Naive thymus-derived CD4-positive, alpha-beta T cell (primary cell): ENCODE measurements at regions of chr2 and their contacts with region 1.

Region 1: GRCh38 chr2:177263451-177264208 is 897 bp downstream of the NFE2L2 start:
- DNase-seq: peak; percentile 91 to 98 (median 95)
- ATAC-seq: peak; percentile 76
- H3K4me3 ChIP-seq: peak overlapping the region; percentile 80
- H3K4me3 Mint-ChIP-seq: peak overlapping the region; percentile 90 to 100 (median 95)
- H3K27ac ChIP-seq: peak overlapping the region; percentile 98
- H3K27ac Mint-ChIP-seq: peak overlapping the region; percentile 86 to 98 (median 96)
- H3K4me1 ChIP-seq: peaks cover 27 to 28% of the 10 kb centered on the region in 2 donors
- H3K4me1 Mint-ChIP-seq: peaks cover 28 to 62% (median 56%) of the 10 kb centered on the region in 7 donors
- H3K27me3 ChIP-seq: no peaks in the 10 kb centered on the region
- H3K27me3 Mint-ChIP-seq: no peaks in the 10 kb centered on the region

Region 2: GRCh38 chr2:176001916-176002687 is 1261.5 kb before region 1 on chr2 and contains the start of gene LNPK:
- CTCF ChIA-PET with region 1: no interaction called
- POLR2A ChIA-PET with region 1: no interaction called
- intact Hi-C with region 1: loop called in 1 of 2 experiments (anchors 10 kb)
- DNase-seq: peak; percentile 82 to 93 (median 91)
- ATAC-seq: peak; percentile 94
- H3K4me3 ChIP-seq: peak within 1 kb of the TSS; percentile 84
- H3K4me3 Mint-ChIP-seq: peak within 1 kb of the TSS; percentile 89 to 96 (median 92)
- H3K27ac ChIP-seq: peak within 1 kb of the TSS; percentile 75
- H3K27ac Mint-ChIP-seq: peak within 1 kb of the TSS; percentile 79 to 99 (median 92)
- H3K4me1 ChIP-seq: peaks cover 11 to 16% of the 10 kb centered on the region in 2 donors
- H3K4me1 Mint-ChIP-seq: peaks cover 18 to 35% (median 31%) of the 10 kb centered on the region in 7 donors
- H3K27me3 ChIP-seq: no peaks in the 10 kb centered on the region
- H3K27me3 Mint-ChIP-seq: peaks cover 0 to 9% (median 0%) of the 10 kb centered on the region in 5 donors
- total RNA-seq, gene LNPK: 19.4 to 36.8 (median 24.0) TPM

Region 3: DNA sequence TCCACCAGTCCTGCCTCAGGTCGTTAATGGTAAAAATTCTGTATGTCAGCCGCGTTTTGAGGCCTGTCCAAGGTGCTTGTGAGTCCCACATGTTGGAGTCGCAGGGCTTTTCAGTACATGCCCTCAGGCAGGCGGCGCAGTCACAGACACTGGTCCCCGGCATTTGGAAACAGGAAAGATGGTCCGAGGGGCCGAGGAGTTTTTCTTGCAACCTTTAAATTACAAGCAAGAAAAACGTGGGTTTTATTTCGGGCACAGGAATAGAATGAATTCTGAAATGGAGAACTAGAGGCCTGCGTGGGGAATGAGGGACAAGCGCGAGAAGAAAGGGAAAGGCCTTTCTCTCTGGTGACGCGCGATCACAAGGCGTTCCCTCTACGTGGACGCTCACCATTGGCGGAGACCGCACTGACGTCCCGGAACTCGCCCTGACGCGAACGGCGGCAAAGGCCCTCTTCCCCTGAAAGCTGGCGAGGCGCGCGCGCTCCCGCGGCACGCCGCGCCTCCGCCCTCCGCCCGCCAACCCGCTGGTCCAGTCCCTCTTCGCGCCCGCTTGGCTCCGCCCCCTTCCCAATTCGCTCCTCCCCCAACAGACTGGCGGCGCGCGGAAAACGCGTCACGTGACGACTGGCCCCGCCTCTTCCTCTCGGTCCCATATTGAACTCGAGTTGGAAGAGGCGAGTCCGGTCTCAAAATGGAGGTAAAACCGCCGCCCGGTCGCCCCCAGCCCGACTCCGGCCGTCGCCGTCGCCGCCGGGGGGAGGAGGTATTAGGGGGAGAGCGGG is 51.3 kb before region 1 on chr2 and contains the start of gene HNRNPA3:
- CTCF ChIA-PET with region 1: interaction called, 14 read pairs
- POLR2A ChIA-PET with region 1: interaction called, 76 read pairs
- intact Hi-C with region 1: loop called (anchors 1 kb)
- DNase-seq: peak; percentile 99 to 100 (median 100)
- ATAC-seq: peak; percentile 93
- H3K4me3 ChIP-seq: peak within 1 kb of the TSS; percentile 87
- H3K4me3 Mint-ChIP-seq: peak within 1 kb of the TSS; percentile 88 to 96 (median 94)
- H3K27ac ChIP-seq: peak within 1 kb of the TSS; percentile 99
- H3K27ac Mint-ChIP-seq: peak within 1 kb of the TSS; percentile 98 to 100 (median 99)
- H3K4me1 ChIP-seq: peaks cover 38 to 43% of the 10 kb centered on the region in 2 donors
- H3K4me1 Mint-ChIP-seq: peaks cover 27 to 60% (median 48%) of the 10 kb centered on the region in 7 donors
- H3K27me3 ChIP-seq: no peaks in the 10 kb centered on the region
- H3K27me3 Mint-ChIP-seq: peaks cover 0 to 6% (median 0%) of the 10 kb centered on the region in 5 donors
- total RNA-seq, gene HNRNPA3: 151 to 311 (median 184) TPM

Region 4: GRCh38 chr2:177247693-177248262 is 15.9 kb before region 1 on chr2:
- CTCF ChIA-PET with region 1: interaction called, 3 read pairs
- POLR2A ChIA-PET with region 1: interaction called, 44 read pairs
- intact Hi-C with region 1: loop called (anchors 1 kb)
- DNase-seq: no peak
- ATAC-seq: no peak
- H3K4me3 ChIP-seq: no peak overlapping the region
- H3K4me3 Mint-ChIP-seq: peak overlapping the region in 1 of 10 donors; percentile 19
- H3K27ac ChIP-seq: peak overlapping the region; percentile 29
- H3K27ac Mint-ChIP-seq: peak overlapping the region in 7 of 9 donors; percentile 31 to 76 (median 56)
- H3K4me1 ChIP-seq: peaks cover 10 to 50% of the 10 kb centered on the region in 2 donors
- H3K4me1 Mint-ChIP-seq: peaks cover 55 to 95% (median 86%) of the 10 kb centered on the region in 7 donors
- H3K27me3 ChIP-seq: no peaks in the 10 kb centered on the region
- H3K27me3 Mint-ChIP-seq: no peaks in the 10 kb centered on the region

Region 5: DNA sequence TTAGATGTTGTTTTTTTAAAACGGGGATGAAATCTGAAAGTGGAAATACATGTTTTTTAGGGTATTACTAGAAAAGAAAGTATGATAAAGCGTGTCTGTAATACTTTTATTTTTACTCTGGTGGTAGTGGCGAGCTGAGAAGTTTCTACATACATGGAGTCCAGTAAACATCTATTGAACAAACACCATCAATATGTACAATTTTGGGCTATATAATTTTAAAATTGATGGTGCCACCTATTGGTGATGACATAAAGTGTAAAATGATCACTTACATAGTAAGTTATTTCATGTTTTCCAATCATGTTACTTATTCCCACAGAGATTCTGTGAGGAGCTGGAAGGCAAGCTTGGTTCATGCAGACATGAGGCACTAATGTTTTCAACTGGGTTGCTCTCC is 32.4 kb after region 1 on chr2:
- CTCF ChIA-PET with region 1: interaction called, 77 read pairs
- POLR2A ChIA-PET with region 1: interaction called, 144 read pairs
- intact Hi-C with region 1: loop called (anchors 1 kb)
- DNase-seq: peak in 6 of 9 donors; percentile 27 to 52 (median 41)
- ATAC-seq: peak; percentile 70
- H3K4me3 ChIP-seq: no peak overlapping the region
- H3K4me3 Mint-ChIP-seq: no peak overlapping the region
- H3K27ac ChIP-seq: no peak overlapping the region
- H3K27ac Mint-ChIP-seq: peak overlapping the region in 3 of 9 donors; percentile 22 to 56 (median 32)
- H3K4me1 ChIP-seq: peaks cover 0 to 1% of the 10 kb centered on the region in 2 donors
- H3K4me1 Mint-ChIP-seq: peaks cover 0 to 34% (median 23%) of the 10 kb centered on the region in 7 donors
- H3K27me3 ChIP-seq: no peaks in the 10 kb centered on the region
- H3K27me3 Mint-ChIP-seq: no peaks in the 10 kb centered on the region

Region 6: DNA sequence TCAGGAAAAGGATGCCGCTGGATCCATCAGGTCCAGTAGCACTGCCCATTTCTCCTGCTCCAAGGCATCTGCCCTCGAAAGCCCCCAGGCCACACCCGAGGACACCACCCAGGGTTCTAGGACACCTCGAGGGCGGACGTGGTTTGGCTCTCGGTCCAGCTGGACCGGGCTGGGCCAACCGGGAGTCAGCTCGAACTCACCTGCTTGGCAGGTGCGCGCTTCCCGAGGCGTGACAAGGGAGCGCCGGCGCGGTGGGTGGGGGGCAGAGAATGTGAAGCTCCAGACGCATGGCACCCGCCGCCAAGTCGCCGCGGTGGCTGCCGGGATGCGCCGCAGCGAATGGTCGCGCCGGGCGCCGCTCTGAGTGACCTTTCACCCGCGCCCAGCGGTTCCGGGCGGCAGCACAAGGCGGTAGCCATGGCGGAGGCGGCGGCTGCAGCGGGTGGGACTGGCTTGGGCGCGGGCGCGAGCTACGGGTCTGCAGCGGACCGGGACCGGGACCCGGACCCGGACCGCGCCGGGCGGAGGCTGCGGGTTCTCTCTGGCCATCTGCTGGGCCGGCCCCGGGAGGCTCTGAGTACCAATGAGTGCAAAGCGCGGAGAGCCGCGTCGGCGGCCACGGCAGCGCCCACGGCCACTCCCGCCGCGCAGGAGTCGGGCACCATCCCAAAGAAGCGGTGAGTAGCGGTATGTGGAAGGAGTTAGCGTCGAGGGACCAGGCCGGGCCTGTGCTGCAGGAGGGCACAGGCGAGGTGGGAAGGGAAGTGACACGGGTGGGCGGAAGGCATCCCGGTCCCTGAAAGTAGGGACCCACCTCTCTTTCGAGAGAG is 129.0 kb after region 1 on chr2 and contains the start of gene AGPS:
- CTCF ChIA-PET with region 1: interaction called, 7 read pairs
- POLR2A ChIA-PET with region 1: interaction called, 27 read pairs
- intact Hi-C with region 1: loop called (anchors 1 kb)
- DNase-seq: peak; percentile 62 to 86 (median 71)
- ATAC-seq: peak; percentile 94
- H3K4me3 ChIP-seq: peak within 1 kb of the TSS; percentile 67
- H3K4me3 Mint-ChIP-seq: peak within 1 kb of the TSS; percentile 81 to 99 (median 96)
- H3K27ac ChIP-seq: peak within 1 kb of the TSS; percentile 53
- H3K27ac Mint-ChIP-seq: peak within 1 kb of the TSS; percentile 85 to 97 (median 92)
- H3K4me1 ChIP-seq: peaks cover 20 to 23% of the 10 kb centered on the region in 2 donors
- H3K4me1 Mint-ChIP-seq: peaks cover 48 to 74% (median 61%) of the 10 kb centered on the region in 7 donors
- H3K27me3 ChIP-seq: no peaks in the 10 kb centered on the region
- H3K27me3 Mint-ChIP-seq: no peaks in the 10 kb centered on the region
- total RNA-seq, gene AGPS: 21.8 to 60.4 (median 26.1) TPM

Region 7: GRCh38 chr2:177618255-177619253 is 354.9 kb after region 1 on chr2:
- CTCF ChIA-PET with region 1: no interaction called
- POLR2A ChIA-PET with region 1: no interaction called
- intact Hi-C with region 1: loop called (anchors 1 kb)
- DNase-seq: peak; percentile 86 to 93 (median 91)
- ATAC-seq: peak; percentile 95
- H3K4me3 ChIP-seq: peak overlapping the region; percentile 86
- H3K4me3 Mint-ChIP-seq: peak overlapping the region; percentile 80 to 99 (median 96)
- H3K27ac ChIP-seq: peak overlapping the region; percentile 96
- H3K27ac Mint-ChIP-seq: peak overlapping the region; percentile 98 to 100 (median 99)
- H3K4me1 ChIP-seq: no peaks in the 10 kb centered on the region
- H3K4me1 Mint-ChIP-seq: peaks cover 0 to 15% (median 9%) of the 10 kb centered on the region in 7 donors
- H3K27me3 ChIP-seq: no peaks in the 10 kb centered on the region
- H3K27me3 Mint-ChIP-seq: peaks cover 0 to 35% (median 9%) of the 10 kb centered on the region in 5 donors